ENCODE measurements at regions of chr1 and their contacts with region 1.

Region 1: DNA sequence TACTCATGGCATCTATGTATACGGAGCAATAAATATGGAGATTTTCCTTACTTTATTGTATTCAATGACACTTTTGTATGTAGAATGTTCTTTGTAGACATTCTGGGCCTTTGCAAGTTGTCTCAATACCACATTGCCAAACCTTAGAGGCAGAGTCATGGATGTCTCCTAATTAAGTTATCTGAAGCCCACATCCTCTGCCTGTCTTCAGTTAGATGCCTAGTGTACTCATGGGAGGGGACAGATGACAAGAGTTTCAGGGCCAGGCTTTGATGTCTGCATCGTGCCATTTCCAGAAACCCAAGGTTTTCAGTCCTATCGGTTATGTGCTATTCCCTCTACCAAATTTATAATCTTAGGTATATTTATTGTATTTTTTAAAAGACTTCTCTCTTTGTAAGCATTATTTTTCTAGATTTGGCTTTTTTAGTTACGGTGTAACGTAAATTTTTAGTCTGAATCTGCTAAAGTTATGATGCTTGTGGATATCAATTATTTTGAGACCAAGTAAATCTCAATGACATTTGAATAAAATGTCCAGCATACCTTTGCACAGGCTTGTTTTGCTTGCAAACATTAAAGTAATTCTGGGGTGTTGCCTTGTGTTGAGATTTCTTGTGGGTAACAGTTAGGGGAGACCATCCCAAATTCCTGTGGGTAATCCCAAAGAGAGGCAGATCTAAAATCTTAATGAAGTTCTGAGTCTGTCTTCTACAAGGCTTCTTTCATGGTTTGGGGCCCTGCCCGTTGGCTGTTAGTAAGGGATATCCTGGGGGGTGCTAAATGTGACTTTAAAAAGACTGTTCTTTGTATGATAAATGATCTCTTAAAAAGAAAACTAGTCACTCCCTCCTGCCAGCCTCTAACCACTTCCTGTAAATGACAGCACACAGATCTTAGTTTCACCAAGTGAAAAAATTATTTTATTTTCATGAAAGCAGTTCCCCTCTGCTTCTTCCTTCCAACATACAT is 8.0 kb upstream of the MACF1 start:
- DNase-seq: no peak
- ATAC-seq: peak in 2 of 4 donors; percentile 9 to 21
- H3K4me3 ChIP-seq: no peak overlapping the region
- H3K27ac ChIP-seq: peak overlapping the region in 2 of 4 donors; percentile 46 to 47
- H3K4me1 ChIP-seq: peaks cover 10 to 44% (median 21%) of the 10 kb centered on the region in 3 donors
- H3K27me3 ChIP-seq: no peaks in the 10 kb centered on the region
- CTCF ChIP-seq: no peak

Region 2: DNA sequence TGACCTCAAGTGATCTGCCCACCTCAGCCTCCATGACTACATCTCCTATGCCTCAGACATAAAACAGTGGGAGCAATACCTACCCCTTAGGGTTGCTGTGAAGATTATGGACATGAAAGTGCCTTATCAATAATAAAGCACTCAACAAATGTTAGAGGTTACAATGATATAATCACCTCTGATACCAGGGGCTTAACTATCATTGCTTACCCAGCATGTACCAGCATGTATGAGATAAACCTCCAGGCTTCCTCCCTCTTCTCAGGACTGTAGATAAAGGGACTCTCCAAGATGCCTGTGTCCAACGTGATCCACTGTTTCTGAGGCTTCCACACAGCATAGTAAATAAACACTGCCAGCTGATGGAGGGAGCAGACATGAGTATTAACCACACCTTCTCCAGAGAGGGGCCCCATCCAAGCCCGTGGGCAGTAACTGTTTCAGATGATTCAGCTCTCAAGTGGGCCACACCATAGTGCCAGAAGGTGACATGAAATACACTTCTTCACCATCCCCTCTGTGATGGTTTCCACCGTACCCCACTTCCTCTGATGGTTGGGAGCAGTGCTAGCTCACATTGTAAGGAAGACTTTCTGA is 281.1 kb before region 1 on chr1:
- intact Hi-C with region 1: no loop called
- DNase-seq: no peak
- ATAC-seq: no peak
- H3K4me3 ChIP-seq: no peak overlapping the region
- H3K27ac ChIP-seq: no peak overlapping the region
- H3K4me1 ChIP-seq: no peaks in the 10 kb centered on the region
- H3K27me3 ChIP-seq: no peaks in the 10 kb centered on the region
- CTCF ChIP-seq: no peak

Region 3: GRCh38 chr1:39258146-39258924 is 61.8 kb after region 1 on chr1:
- intact Hi-C with region 1: loop called in 1 of 3 experiments (anchors 10 kb)
- DNase-seq: peak in 5 of 6 donors; percentile 37 to 77 (median 62)
- ATAC-seq: peak; percentile 86 to 95 (median 92)
- H3K4me3 ChIP-seq: no peak overlapping the region
- H3K27ac ChIP-seq: no peak overlapping the region
- H3K4me1 ChIP-seq: no peaks in the 10 kb centered on the region
- H3K27me3 ChIP-seq: no peaks in the 10 kb centered on the region
- CTCF ChIP-seq: peak; percentile 55 to 79 (median 71)

Region 4: GRCh38 chr1:39370602-39371001 is 174.1 kb after region 1 on chr1:
- intact Hi-C with region 1: no loop called
- DNase-seq: no peak
- ATAC-seq: peak in 1 of 4 donors; percentile 25
- H3K4me3 ChIP-seq: no peak overlapping the region
- H3K27ac ChIP-seq: no peak overlapping the region
- H3K4me1 ChIP-seq: no peaks in the 10 kb centered on the region
- H3K27me3 ChIP-seq: no peaks in the 10 kb centered on the region
- CTCF ChIP-seq: no peak

Region 5: DNA sequence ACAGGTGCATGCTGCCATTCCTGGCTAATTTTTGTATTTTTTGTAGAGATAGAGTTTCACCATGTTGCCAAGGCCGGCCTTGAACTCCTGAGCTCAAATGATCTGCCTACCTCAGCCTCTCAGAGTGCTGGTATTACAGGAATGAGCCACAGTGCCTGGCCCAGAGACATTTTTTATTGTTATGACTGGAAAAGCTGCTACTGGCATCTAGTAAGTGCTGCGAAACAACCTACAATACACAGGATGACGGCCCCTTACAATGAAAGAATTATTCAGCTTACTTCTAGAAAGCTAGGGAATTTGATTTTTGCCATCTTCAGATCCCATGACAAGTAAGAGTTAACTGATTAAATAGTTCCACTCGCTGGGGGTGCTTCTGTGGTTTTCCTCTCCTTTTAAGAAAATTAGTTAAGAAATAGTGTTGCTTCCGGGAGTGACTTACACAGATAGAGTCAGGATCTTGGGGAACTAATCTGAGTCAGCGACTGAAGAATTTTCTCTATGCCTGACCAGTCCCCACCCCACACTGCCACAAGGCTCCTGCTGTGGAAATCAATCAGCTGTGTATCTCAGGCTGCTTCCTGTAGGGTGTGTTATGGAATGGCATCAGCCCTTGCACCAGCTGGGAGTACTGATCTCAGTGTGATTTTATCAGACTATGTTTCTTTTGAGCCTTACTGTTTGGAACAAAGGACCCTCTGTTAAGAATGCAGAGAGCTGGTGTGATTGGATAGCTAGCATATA is 201.9 kb after region 1 on chr1:
- intact Hi-C with region 1: no loop called
- DNase-seq: peak in 4 of 6 donors; percentile 46 to 67 (median 52)
- ATAC-seq: peak; percentile 44 to 84 (median 74)
- H3K4me3 ChIP-seq: no peak overlapping the region
- H3K27ac ChIP-seq: peak overlapping the region; percentile 23 to 86 (median 50)
- H3K4me1 ChIP-seq: peaks cover 32 to 48% (median 40%) of the 10 kb centered on the region in 3 donors
- H3K27me3 ChIP-seq: no peaks in the 10 kb centered on the region
- CTCF ChIP-seq: no peak

Measured in pancreas (tissue), 10 donors.